Activated CD8-positive, alpha-beta T cell treated with anti-CD3 and anti-CD28 coated beads for 36 hours (primary cell): ENCODE measurements at regions of chr13 and their contacts with region 1.

Region 1: DNA sequence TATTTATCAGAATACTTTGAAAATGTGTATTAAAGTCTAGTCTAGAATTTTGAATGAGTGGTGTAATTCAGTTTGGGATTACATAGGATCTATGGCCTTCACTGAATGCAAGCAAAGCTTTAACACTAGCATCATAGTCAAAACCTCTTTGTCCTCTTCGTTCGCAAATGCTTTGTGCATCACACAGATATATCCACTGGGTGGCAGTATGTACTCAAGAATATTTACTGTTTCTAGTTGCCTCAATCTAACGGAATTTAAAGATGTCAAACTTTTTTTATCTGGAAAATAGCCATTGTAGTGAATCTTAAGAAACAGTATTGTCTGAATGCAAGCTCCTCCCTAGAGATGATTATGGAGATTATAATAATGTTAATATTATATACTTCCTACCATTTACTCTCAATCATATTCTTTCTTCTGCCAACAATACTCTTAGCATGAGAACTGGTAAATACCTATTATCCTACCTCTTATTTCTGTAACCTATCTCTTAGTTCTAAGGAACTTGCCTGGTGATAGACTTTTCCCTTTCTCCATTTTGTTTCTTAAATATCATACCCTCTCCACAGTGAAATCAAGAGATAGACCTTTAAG is 25.8 kb downstream of the LACC1 start:
- DNase-seq: peak; percentile 33
- ATAC-seq: peak; percentile 53
- H3K4me3 Mint-ChIP-seq: no peak overlapping the region
- H3K27ac Mint-ChIP-seq: no peak overlapping the region
- H3K4me1 Mint-ChIP-seq: peaks cover 6% of the 10 kb centered on the region
- H3K27me3 Mint-ChIP-seq: peaks cover 11% of the 10 kb centered on the region
- CTCF ChIP-seq: peak; percentile 65

Region 2: DNA sequence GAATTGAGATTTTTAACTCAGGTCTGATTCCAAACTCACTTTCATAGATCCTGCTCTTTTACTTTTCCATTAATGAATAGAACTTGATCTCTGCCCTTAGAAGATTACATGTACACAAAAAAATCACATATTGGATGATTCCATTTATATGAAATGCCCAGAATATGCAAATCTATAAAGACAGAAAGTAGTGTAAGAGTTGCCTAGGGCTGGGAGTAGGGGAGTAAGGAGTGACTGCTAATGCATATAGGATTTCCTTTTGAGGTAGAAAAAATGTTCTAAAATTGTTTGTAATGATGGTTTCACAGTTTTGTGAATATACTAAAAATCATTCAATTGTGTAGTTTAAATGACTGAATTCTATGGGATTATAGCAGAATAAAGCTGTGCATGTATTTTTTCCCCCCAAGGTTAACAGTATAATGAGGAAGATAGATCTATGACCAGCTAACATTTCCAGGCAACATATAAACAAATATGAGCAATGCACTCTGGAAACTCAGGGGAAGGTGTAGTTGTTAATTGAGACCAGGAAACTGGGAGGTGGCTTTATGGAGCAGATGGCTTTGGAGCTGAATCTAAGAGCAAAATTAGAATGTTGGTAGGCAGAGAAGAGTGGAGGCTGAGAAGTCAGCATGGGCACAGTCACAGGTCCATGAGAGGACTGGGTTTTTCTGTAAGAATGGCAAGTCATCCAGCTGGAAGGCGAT is 15.6 kb after region 1 on chr13:
- CTCF ChIA-PET with region 1: interaction called, 13 read pairs
- POLR2A ChIA-PET with region 1: no interaction called
- intact Hi-C with region 1: no loop called
- DNase-seq: no peak
- ATAC-seq: no peak
- H3K4me3 Mint-ChIP-seq: no peak overlapping the region
- H3K27ac Mint-ChIP-seq: no peak overlapping the region
- H3K4me1 Mint-ChIP-seq: no peaks in the 10 kb centered on the region
- H3K27me3 Mint-ChIP-seq: peaks cover 7% of the 10 kb centered on the region
- CTCF ChIP-seq: no peak

Region 3: DNA sequence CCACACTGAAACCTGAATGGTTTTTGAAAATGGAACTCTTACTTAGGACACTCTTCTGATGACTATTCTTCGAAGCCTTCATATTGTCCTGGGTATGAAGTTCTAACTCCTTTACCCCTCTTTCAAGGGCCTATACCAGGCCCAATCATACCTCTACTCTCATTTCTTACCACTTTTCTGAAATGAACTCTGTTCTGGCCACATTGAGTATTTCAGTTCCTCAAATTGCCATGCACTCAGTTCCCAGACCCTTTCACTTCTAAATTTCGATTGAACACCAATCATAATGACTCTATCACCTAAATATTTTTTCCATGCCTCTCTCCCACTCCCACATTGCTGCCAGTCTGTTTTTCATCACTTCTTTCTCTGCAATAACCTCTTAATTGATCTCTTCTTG is 27.8 kb after region 1 on chr13:
- CTCF ChIA-PET with region 1: no interaction called
- POLR2A ChIA-PET with region 1: no interaction called
- intact Hi-C with region 1: no loop called
- DNase-seq: no peak
- ATAC-seq: no peak
- H3K4me3 Mint-ChIP-seq: no peak overlapping the region
- H3K27ac Mint-ChIP-seq: no peak overlapping the region
- H3K4me1 Mint-ChIP-seq: no peaks in the 10 kb centered on the region
- H3K27me3 Mint-ChIP-seq: peaks cover 6% of the 10 kb centered on the region
- CTCF ChIP-seq: no peak

Region 4: GRCh38 chr13:44075113-44075512 is 169.6 kb after region 1 on chr13:
- CTCF ChIA-PET with region 1: no interaction called
- POLR2A ChIA-PET with region 1: no interaction called
- intact Hi-C with region 1: no loop called
- DNase-seq: no peak
- ATAC-seq: no peak
- H3K4me3 Mint-ChIP-seq: no peak overlapping the region
- H3K27ac Mint-ChIP-seq: no peak overlapping the region
- H3K4me1 Mint-ChIP-seq: no peaks in the 10 kb centered on the region
- H3K27me3 Mint-ChIP-seq: no peaks in the 10 kb centered on the region
- CTCF ChIP-seq: no peak

Region 5: GRCh38 chr13:44470638-44471562 is 565.4 kb after region 1 on chr13:
- CTCF ChIA-PET with region 1: interaction called, 29 read pairs
- POLR2A ChIA-PET with region 1: no interaction called
- intact Hi-C with region 1: loop called (anchors 2 kb)
- DNase-seq: no peak
- ATAC-seq: no peak
- H3K4me3 Mint-ChIP-seq: no peak overlapping the region
- H3K27ac Mint-ChIP-seq: no peak overlapping the region
- H3K4me1 Mint-ChIP-seq: no peaks in the 10 kb centered on the region
- H3K27me3 Mint-ChIP-seq: no peaks in the 10 kb centered on the region
- CTCF ChIP-seq: peak; percentile 57